ENCODE measurements at regions of chr3 and their contacts with region 1.

Region 1: GRCh38 chr3:124552239-124552638 is 178.0 kb upstream of the UMPS start:
- DNase-seq: no peak
- ATAC-seq: no peak
- H3K4me3 ChIP-seq: no peak overlapping the region
- H3K4me3 Mint-ChIP-seq: no peak overlapping the region
- H3K27ac ChIP-seq: no peak overlapping the region
- H3K27ac Mint-ChIP-seq: no peak overlapping the region
- H3K4me1 ChIP-seq: no peaks in the 10 kb centered on the region
- H3K4me1 Mint-ChIP-seq: peaks cover 6% of the 10 kb centered on the region
- H3K27me3 ChIP-seq: peaks cover 2 to 36% of the 10 kb centered on the region in 2 experiments
- H3K27me3 Mint-ChIP-seq: peaks cover 62% of the 10 kb centered on the region
- CTCF ChIP-seq: no peak

Region 2: DNA sequence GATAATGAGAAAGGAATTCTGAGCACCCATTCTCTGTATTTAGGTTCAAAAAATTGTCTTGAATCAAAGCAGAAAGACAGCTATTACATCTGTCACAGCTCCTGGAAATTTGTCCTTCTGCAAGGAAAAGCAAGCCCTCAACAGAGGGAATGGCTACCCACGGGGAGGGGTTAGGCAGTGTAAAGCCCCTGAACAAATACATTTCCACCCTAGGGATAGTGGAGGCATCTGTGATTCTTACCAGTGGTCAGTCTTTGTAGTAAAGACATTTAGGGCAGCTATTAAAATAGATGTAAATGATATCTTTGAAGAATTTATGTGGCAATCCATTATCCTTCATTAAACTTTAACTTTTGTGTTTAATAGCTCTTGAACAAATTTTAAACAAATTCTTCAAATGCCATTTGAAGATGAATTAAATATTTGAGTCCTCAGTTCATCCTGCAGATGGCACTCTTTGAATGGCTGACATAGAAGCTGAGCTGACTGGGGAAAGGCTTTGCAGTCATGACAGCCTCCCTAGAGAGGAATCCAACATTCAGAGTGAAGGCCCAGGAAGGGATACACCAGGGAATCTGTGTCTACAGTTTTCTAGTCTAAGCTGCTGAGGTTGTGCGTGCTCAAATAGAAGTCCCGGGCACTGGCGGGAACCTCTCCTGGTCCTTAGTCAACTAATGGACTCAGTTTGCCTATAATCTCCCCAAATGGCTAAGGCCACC is 200.7 kb before region 1 on chr3:
- CTCF ChIA-PET with region 1: no interaction called
- POLR2A ChIA-PET with region 1: no interaction called
- intact Hi-C with region 1: loop called in 1 of 2 experiments (anchors 5 kb)
- DNase-seq: no peak
- ATAC-seq: no peak
- H3K4me3 ChIP-seq: no peak overlapping the region
- H3K4me3 Mint-ChIP-seq: no peak overlapping the region
- H3K27ac ChIP-seq: no peak overlapping the region
- H3K27ac Mint-ChIP-seq: no peak overlapping the region
- H3K4me1 ChIP-seq: no peaks in the 10 kb centered on the region
- H3K4me1 Mint-ChIP-seq: no peaks in the 10 kb centered on the region
- H3K27me3 ChIP-seq: no peaks in the 10 kb centered on the region
- H3K27me3 Mint-ChIP-seq: no peaks in the 10 kb centered on the region
- CTCF ChIP-seq: no peak

Region 3: DNA sequence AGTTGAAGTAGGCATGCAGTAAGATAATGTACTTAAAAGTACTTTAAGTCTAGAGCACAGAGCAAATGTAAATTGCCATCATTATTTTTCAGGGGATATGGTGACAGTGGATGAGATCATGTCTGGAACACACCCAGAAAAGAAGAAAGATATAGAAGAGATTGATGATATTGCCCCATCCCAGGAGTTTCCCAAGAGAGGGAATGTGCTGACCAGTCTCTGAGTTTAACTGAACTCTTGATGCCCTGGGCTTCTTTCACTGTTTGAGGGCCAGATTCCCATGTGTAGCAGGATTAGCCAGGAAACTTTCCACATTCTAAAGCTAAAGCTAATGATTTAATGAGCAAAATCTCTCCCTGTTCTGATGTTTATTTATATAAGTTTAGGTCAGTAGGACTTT is 188.8 kb before region 1 on chr3:
- CTCF ChIA-PET with region 1: no interaction called
- POLR2A ChIA-PET with region 1: no interaction called
- intact Hi-C with region 1: no loop called
- DNase-seq: no peak
- ATAC-seq: no peak
- H3K4me3 ChIP-seq: no peak overlapping the region
- H3K4me3 Mint-ChIP-seq: no peak overlapping the region
- H3K27ac ChIP-seq: no peak overlapping the region
- H3K27ac Mint-ChIP-seq: no peak overlapping the region
- H3K4me1 ChIP-seq: no peaks in the 10 kb centered on the region
- H3K4me1 Mint-ChIP-seq: no peaks in the 10 kb centered on the region
- H3K27me3 ChIP-seq: peaks cover 0 to 3% of the 10 kb centered on the region in 2 experiments
- H3K27me3 Mint-ChIP-seq: peaks cover 23% of the 10 kb centered on the region
- CTCF ChIP-seq: no peak

Region 4: DNA sequence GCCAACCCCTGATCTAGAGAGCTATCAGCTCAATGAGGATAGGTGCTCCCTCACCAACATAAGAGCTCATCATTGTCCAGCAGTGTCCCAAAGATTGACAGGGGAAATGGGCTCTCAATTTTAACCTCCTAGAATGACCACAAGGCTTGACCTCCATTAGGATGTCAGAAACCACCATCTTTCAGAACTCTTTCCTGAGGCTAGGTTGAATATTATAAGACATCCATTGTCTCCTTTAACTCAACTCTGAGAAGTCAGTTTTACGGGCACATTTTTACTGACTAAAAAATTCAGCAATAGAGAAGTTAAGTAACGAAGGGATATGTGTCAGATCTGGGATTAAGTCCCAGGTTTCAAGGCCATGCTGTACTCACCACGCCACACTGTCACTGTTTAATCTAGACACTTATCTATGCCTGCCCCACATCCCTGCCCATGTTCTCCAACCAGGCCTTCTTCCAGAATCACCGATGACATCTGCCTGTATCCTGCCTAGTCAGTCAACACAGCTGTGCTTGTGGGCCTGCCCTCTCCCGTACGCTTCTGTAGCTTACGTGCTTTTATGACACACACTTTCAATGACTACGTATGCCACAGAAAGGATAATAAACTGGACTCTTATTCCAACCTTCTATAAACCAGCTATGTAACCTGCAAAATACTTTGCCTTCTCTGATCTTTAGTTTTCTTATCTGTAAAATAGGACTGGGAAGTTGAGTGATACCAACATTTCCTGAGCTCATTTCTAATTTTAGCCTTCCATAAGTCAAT is 399.5 kb after region 1 on chr3:
- CTCF ChIA-PET with region 1: no interaction called
- POLR2A ChIA-PET with region 1: no interaction called
- intact Hi-C with region 1: no loop called
- DNase-seq: no peak
- ATAC-seq: no peak
- H3K4me3 ChIP-seq: no peak overlapping the region
- H3K4me3 Mint-ChIP-seq: no peak overlapping the region
- H3K27ac ChIP-seq: no peak overlapping the region
- H3K27ac Mint-ChIP-seq: no peak overlapping the region
- H3K4me1 ChIP-seq: no peaks in the 10 kb centered on the region
- H3K4me1 Mint-ChIP-seq: no peaks in the 10 kb centered on the region
- H3K27me3 ChIP-seq: no peaks in the 10 kb centered on the region
- H3K27me3 Mint-ChIP-seq: no peaks in the 10 kb centered on the region
- CTCF ChIP-seq: no peak